Posterior cingulate gyrus (tissue), 11 donors: ENCODE measurements at regions of chr18 and their contacts with region 1.

Region 1: GRCh38 chr18:56391931-56392590 is 246.3 kb downstream of the TXNL1 start:
- DNase-seq: no peak

Region 2: GRCh38 chr18:55786651-55787272 is 605.3 kb before region 1 on chr18:
- intact Hi-C with region 1: loop called (anchors 5 kb)
- DNase-seq: no peak

Region 3: DNA sequence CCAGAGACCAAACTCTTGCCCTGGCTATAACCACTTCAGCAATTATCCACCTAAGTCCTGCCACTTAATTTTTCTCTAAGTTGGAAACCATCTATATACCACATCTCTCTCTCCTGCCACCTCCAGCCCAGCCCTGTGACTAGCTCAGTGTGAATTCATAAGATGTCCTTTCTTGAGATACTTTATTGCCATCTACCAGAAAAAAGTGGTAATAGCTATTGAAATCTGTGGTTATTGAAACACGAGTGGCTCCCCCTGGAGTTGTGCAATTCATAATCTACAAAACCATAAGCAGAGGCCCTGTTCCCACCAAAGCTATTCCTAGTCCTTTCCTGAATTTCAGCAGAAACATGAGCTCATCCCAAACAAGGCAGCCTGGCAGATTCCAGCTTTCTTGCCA is 77.7 kb before region 1 on chr18:
- intact Hi-C with region 1: no loop called
- DNase-seq: peak in 2 of 10 donors; percentile 27 to 40